ENCODE measurements at regions of chr17 and their contacts with region 1.

Region 1: DNA sequence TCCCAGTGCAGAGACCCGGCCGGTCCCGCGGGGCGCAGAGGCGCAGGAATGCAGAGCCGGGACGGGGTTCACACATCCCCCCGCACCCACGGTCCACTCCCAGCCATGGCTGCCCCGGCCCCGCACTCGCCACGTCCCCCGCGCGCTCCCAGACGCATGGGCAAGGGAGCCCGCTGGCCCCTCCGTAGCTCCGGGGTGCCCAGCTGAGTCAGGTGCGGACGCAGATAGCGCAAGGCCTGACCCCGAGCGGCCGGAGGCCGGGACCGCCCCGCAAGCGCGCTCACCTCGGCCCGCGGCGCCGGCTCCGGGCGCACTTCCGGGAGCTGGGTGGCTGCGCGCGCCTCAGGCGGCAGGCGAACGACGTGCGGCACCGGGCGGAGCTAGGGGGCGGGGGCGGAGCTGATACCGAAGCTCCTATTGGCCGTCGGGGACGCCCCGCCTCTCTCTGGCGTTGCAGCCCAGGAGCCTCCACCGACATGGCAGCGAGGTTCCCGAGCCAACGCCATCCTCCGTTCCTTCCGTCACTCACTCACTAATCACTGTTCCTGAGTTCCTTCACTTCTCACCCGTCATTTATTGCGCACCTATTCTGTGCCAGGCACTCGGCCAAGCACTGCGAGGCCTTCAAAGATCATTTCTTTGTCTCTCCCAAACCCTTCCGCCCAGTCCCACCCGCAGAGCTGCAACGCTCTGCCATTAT is at the start of gene ZNF18:
- DNase-seq: peak; percentile 51
- H3K4me3 ChIP-seq: peak within 1 kb of the TSS; percentile 82
- CTCF ChIP-seq: no peak

Region 2: DNA sequence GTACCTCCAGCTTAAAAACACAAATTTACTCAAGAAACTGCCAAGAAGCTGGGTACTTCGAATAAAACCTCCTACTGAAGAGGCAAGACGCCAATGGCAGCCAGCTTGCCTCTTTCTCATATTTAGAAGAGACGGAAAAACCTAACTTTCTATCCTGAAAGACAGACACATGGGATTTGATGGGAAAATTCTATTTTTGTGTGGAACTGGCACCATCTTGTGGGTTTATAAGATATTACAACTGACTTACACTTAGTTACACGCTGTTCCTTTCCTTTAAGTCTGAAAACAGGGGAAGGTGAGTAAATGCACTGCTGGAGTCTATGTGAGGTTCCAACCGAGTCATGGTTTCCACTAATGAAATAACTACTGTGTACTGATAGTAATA is 10.4 kb before region 1 on chr17:
- CTCF ChIA-PET with region 1: interaction called, 25 read pairs
- POLR2A ChIA-PET with region 1: interaction called, 3 read pairs
- DNase-seq: no peak
- H3K4me3 ChIP-seq: no peak overlapping the region
- CTCF ChIP-seq: peak; percentile 20

Region 3: DNA sequence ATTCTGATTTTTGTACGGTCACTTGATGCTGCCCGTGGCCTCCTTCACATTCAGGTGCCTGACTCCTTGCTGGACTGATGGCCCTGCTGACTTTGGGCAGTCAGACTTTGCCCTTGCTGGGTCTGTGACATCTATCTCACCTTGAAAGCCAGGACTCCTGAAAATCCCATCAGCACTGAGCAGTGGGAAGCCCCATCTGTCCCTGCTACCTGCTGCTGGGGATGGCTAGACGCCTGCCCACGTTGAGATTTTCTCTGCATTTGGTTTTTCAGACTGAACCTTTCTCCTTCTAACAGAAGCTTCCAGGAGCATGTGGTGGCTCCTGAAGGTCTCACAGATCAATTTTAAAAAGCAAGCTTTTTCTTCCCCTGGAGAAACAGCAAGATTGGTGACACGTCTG is 10.2 kb after region 1 on chr17:
- CTCF ChIA-PET with region 1: interaction called, 5 read pairs
- POLR2A ChIA-PET with region 1: interaction called, 21 read pairs
- DNase-seq: no peak
- H3K4me3 ChIP-seq: no peak overlapping the region
- CTCF ChIP-seq: no peak

Region 4: GRCh38 chr17:12020642-12021622 is 23.6 kb after region 1 on chr17 and contains the start of gene MAP2K4:
- CTCF ChIA-PET with region 1: interaction called, 4 read pairs
- POLR2A ChIA-PET with region 1: interaction called, 23 read pairs
- DNase-seq: no peak
- H3K4me3 ChIP-seq: peak within 1 kb of the TSS; percentile 70
- CTCF ChIP-seq: no peak

Measured in AG04449 (cell line).